ENCODE measurements at regions of chr1 and their contacts with region 1.

Region 1: GRCh38 chr1:200386416-200386815 is 23.4 kb downstream of the ZNF281 start:
- DNase-seq: no peak
- H3K27ac ChIP-seq: no peak overlapping the region
- CTCF ChIP-seq: no peak

Region 2: GRCh38 chr1:198681831-198682759 is 1704.3 kb before region 1 on chr1:
- CTCF ChIA-PET with region 1: no interaction called
- POLR2A ChIA-PET with region 1: interaction called, 14 read pairs
- DNase-seq: peak; percentile 62
- H3K27ac ChIP-seq: no peak overlapping the region
- CTCF ChIP-seq: no peak